ENCODE measurements at regions of chr22 and their contacts with region 1.

Region 1: GRCh38 chr22:29040385-29041275 is 21.0 kb downstream of the C22orf31 start:
- DNase-seq: peak; percentile 67
- ATAC-seq: peak; percentile 89
- H3K4me3 ChIP-seq: no peak overlapping the region
- H3K27ac ChIP-seq: no peak overlapping the region
- H3K4me1 ChIP-seq: no peaks in the 10 kb centered on the region
- H3K27me3 ChIP-seq: no peaks in the 10 kb centered on the region
- CTCF ChIP-seq: peak; percentile 88

Region 2: GRCh38 chr22:28855355-28856094 is 185.1 kb before region 1 on chr22:
- CTCF ChIA-PET with region 1: interaction called, 14 read pairs
- POLR2A ChIA-PET with region 1: no interaction called
- in situ Hi-C with region 1: no loop called
- intact Hi-C with region 1: loop called (anchors 5 kb)
- DNase-seq: peak; percentile 69
- ATAC-seq: peak; percentile 84
- H3K4me3 ChIP-seq: no peak overlapping the region
- H3K27ac ChIP-seq: no peak overlapping the region
- H3K4me1 ChIP-seq: no peaks in the 10 kb centered on the region
- H3K27me3 ChIP-seq: no peaks in the 10 kb centered on the region
- CTCF ChIP-seq: peak; percentile 84

Region 3: DNA sequence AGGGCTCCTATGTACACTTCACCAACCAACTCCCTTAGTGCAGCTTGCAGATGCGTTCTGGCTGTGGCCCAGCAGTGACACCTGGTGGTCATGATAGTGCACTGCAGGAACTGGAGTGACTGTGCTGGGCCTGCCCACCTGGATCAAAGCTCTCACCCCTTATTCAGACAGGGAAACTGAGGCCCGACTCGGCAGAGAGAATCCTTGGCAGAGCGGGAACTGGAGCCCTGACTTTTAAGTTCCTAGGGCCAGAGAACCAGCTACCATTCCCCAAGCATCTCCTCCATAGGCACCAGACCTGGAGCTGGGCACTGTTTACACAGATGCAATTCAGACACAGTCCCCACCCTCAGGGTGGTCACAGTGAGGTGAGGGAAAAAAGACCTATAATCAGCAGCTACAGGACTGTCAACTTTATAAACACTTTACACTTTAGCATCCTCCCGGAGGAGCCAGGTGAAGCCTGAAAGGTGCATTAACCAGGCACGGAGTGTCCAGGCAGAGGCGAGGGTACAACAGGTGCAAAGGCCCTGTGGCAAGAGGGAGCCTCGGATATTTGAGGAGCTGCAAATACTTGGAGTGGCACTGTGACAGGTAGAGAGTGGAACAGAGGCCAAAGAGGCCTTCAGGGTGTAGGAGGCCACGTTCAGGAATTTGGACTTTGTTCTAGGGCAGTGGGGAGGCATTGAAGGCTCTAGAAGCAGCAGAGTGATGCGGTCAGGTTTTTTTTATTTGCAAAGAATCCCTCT is 205.2 kb after region 1 on chr22:
- CTCF ChIA-PET with region 1: interaction called, 7 read pairs
- POLR2A ChIA-PET with region 1: no interaction called
- in situ Hi-C with region 1: no loop called
- intact Hi-C with region 1: loop called (anchors 10 kb)
- DNase-seq: peak; percentile 30
- ATAC-seq: peak; percentile 92
- H3K4me3 ChIP-seq: no peak overlapping the region
- H3K27ac ChIP-seq: no peak overlapping the region
- H3K4me1 ChIP-seq: no peaks in the 10 kb centered on the region
- H3K27me3 ChIP-seq: no peaks in the 10 kb centered on the region
- CTCF ChIP-seq: peak; percentile 93